Endothelial cell of umbilical vein (primary cell): ENCODE measurements at regions of chr1 and their contacts with region 1.

Region 1: GRCh38 chr1:115706587-115707425 is 61.7 kb downstream of the CASQ2 start:
- DNase-seq: peak; percentile 39
- H3K4me3 ChIP-seq: no peak overlapping the region
- H3K27ac ChIP-seq: no peak overlapping the region
- H3K4me1 ChIP-seq: no peaks in the 10 kb centered on the region
- H3K27me3 ChIP-seq: peaks cover 0 to 12% of the 10 kb centered on the region in 2 experiments
- CTCF ChIP-seq: peak; percentile 52 to 55
- POLR2A ChIP-seq: no peak

Region 2: DNA sequence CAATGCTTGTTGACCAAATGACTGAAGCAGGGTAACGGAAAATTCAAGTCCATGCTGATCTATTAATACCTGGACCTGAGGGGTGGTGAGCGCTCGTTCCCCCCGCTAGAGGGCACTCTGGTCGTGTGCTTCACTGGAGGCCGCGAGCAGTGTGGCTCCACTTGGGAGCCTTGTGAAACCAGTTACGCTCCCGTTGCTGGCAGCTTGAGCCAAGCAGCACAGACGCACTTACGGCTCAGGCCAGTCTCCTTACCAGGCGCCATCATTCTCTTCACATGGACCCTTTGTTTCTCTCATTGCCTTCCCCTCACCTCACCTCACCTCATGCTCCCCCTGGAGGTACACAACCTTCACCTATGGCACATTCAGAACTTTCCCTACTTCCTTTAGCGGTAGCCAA is 567.8 kb before region 1 on chr1:
- CTCF ChIA-PET with region 1: interaction called, 31 read pairs
- POLR2A ChIA-PET with region 1: no interaction called
- dilution Hi-C with region 1: no loop called
- intact Hi-C with region 1: no loop called
- DNase-seq: peak; percentile 79
- H3K4me3 ChIP-seq: no peak overlapping the region
- H3K27ac ChIP-seq: no peak overlapping the region
- H3K4me1 ChIP-seq: no peaks in the 10 kb centered on the region
- H3K27me3 ChIP-seq: peaks cover 0 to 2% of the 10 kb centered on the region in 2 experiments
- CTCF ChIP-seq: peak; percentile 90 to 92
- POLR2A ChIP-seq: no peak

Region 3: GRCh38 chr1:115227346-115228135 is 479.3 kb before region 1 on chr1:
- CTCF ChIA-PET with region 1: no interaction called
- POLR2A ChIA-PET with region 1: no interaction called
- dilution Hi-C with region 1: no loop called
- intact Hi-C with region 1: no loop called
- DNase-seq: no peak
- H3K4me3 ChIP-seq: no peak overlapping the region
- H3K27ac ChIP-seq: no peak overlapping the region
- H3K4me1 ChIP-seq: no peaks in the 10 kb centered on the region
- H3K27me3 ChIP-seq: no peaks in the 10 kb centered on the region
- CTCF ChIP-seq: no peak
- POLR2A ChIP-seq: no peak

Region 4: DNA sequence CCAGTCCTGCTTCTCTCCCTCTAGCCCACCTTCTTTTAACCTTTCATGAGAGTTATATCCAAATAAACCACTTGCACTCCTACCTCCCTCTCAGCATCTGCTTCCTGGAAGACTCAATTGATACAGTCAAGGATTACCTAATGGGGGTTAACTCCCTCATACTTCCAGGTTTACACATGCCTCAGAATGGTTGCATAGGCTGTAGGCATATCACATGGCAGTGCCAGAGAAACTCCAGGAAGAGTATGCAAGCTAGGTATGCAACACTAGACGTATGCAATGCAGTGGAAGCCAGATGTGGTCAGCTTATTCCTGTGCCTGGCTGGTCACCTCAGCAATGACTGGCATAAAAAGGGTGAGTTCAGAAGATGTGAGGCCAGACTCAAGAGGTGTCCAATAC is 97.8 kb before region 1 on chr1:
- CTCF ChIA-PET with region 1: interaction called, 350 read pairs
- POLR2A ChIA-PET with region 1: no interaction called
- dilution Hi-C with region 1: no loop called
- intact Hi-C with region 1: loop called (anchors 1 kb)
- DNase-seq: no peak
- H3K4me3 ChIP-seq: no peak overlapping the region
- H3K27ac ChIP-seq: no peak overlapping the region
- H3K4me1 ChIP-seq: no peaks in the 10 kb centered on the region
- H3K27me3 ChIP-seq: peaks cover 2 to 3% of the 10 kb centered on the region in 2 experiments
- CTCF ChIP-seq: no peak
- POLR2A ChIP-seq: no peak

Region 5: DNA sequence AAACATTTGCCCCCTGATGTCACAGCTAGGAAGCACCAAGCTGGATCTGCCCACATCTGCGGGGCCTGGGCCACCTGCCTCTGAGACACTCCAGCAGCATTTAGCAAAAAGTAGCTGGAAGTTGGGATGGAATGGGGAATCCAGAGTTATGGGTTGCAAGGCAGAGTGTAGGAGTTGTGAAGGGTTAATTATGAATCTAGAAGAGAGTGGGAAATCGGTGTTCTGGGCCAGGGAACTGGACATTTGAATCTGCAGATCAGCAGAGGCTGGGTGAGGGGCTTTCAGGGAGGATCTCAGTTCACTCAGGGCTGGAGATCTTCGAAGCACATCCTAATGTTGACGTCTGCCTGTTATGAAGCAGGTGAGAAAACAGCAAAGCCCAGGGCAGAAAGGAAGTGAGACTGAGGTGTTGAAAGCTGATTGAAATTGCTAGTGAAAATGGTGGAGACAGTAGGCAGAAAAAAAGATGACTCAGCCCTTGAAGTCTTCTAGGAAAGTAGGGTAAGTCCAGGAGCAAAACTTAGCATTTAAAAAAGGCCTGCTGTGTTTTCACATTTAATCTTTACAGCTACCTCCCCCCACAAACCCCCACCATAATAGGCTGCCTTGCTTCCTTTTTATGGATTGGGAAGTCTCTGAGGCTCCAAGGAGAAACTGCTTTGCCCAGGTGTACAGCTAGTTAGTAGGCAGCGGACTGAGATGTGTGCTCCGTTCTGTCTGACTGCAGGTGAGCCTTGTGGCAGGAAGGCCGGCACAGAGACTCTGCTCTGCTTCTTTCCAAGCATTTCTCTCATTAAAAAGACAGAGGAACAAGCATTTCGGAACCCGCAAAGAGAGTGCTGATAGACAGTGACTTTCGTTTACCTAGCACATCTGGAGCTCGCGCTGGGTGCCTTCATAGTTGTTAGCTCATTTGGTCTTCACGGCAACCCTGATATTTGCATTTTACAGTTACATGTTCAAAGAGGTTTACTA is 57.8 kb before region 1 on chr1:
- CTCF ChIA-PET with region 1: interaction called, 47 read pairs
- POLR2A ChIA-PET with region 1: no interaction called
- dilution Hi-C with region 1: no loop called
- intact Hi-C with region 1: loop called (anchors 5 kb)
- DNase-seq: peak; percentile 56
- H3K4me3 ChIP-seq: no peak overlapping the region
- H3K27ac ChIP-seq: no peak overlapping the region
- H3K4me1 ChIP-seq: peaks cover 19% of the 10 kb centered on the region
- H3K27me3 ChIP-seq: no peaks in the 10 kb centered on the region
- CTCF ChIP-seq: no peak
- POLR2A ChIP-seq: no peak

Region 6: DNA sequence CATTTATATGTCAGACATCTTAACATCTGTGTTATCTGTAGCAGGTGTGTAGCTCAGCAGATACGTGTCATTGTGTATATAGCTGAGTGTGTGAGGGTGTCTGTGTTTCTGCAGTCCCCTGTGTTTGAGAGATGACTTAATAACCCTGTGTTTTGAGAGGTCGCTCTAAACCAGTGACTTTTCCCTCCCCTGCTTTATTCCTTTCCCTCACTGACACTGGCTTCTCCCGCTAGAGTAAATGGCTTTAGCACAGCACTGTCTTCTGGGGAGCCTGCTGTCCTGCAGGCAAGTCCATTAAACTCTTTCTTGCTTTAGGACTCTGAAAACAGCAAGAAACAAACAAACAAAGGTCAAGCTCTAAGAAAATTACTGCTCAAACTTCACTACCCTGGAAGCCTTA is 12.0 kb before region 1 on chr1:
- CTCF ChIA-PET with region 1: interaction called, 24 read pairs
- POLR2A ChIA-PET with region 1: no interaction called
- dilution Hi-C with region 1: no loop called
- intact Hi-C with region 1: no loop called
- DNase-seq: no peak
- H3K4me3 ChIP-seq: no peak overlapping the region
- H3K27ac ChIP-seq: no peak overlapping the region
- H3K4me1 ChIP-seq: no peaks in the 10 kb centered on the region
- H3K27me3 ChIP-seq: peaks cover 0 to 3% of the 10 kb centered on the region in 2 experiments
- CTCF ChIP-seq: no peak
- POLR2A ChIP-seq: no peak

Region 7: GRCh38 chr1:115764541-115764940 is 57.7 kb after region 1 on chr1:
- CTCF ChIA-PET with region 1: interaction called, 33 read pairs
- POLR2A ChIA-PET with region 1: no interaction called
- dilution Hi-C with region 1: no loop called
- intact Hi-C with region 1: no loop called
- DNase-seq: peak; percentile 20
- H3K4me3 ChIP-seq: no peak overlapping the region
- H3K27ac ChIP-seq: no peak overlapping the region
- H3K4me1 ChIP-seq: no peaks in the 10 kb centered on the region
- H3K27me3 ChIP-seq: peaks cover 0 to 3% of the 10 kb centered on the region in 2 experiments
- CTCF ChIP-seq: peak in 1 of 2 donors; percentile 28
- POLR2A ChIP-seq: no peak

Region 8: GRCh38 chr1:115829023-115829693 is 122.4 kb after region 1 on chr1:
- CTCF ChIA-PET with region 1: no interaction called
- POLR2A ChIA-PET with region 1: no interaction called
- dilution Hi-C with region 1: no loop called
- intact Hi-C with region 1: no loop called
- DNase-seq: no peak
- H3K4me3 ChIP-seq: no peak overlapping the region
- H3K27ac ChIP-seq: no peak overlapping the region
- H3K4me1 ChIP-seq: peaks cover 4% of the 10 kb centered on the region
- H3K27me3 ChIP-seq: peaks cover 11 to 32% of the 10 kb centered on the region in 2 experiments
- CTCF ChIP-seq: no peak
- POLR2A ChIP-seq: no peak

Region 9: GRCh38 chr1:115911324-115911723 is 204.5 kb after region 1 on chr1:
- CTCF ChIA-PET with region 1: no interaction called
- POLR2A ChIA-PET with region 1: no interaction called
- dilution Hi-C with region 1: no loop called
- intact Hi-C with region 1: no loop called
- DNase-seq: no peak
- H3K4me3 ChIP-seq: no peak overlapping the region
- H3K27ac ChIP-seq: no peak overlapping the region
- H3K4me1 ChIP-seq: no peaks in the 10 kb centered on the region
- H3K27me3 ChIP-seq: no peaks in the 10 kb centered on the region
- CTCF ChIP-seq: no peak
- POLR2A ChIP-seq: no peak